ENCODE measurements at regions of chr15 and their contacts with region 1.

Region 1: DNA sequence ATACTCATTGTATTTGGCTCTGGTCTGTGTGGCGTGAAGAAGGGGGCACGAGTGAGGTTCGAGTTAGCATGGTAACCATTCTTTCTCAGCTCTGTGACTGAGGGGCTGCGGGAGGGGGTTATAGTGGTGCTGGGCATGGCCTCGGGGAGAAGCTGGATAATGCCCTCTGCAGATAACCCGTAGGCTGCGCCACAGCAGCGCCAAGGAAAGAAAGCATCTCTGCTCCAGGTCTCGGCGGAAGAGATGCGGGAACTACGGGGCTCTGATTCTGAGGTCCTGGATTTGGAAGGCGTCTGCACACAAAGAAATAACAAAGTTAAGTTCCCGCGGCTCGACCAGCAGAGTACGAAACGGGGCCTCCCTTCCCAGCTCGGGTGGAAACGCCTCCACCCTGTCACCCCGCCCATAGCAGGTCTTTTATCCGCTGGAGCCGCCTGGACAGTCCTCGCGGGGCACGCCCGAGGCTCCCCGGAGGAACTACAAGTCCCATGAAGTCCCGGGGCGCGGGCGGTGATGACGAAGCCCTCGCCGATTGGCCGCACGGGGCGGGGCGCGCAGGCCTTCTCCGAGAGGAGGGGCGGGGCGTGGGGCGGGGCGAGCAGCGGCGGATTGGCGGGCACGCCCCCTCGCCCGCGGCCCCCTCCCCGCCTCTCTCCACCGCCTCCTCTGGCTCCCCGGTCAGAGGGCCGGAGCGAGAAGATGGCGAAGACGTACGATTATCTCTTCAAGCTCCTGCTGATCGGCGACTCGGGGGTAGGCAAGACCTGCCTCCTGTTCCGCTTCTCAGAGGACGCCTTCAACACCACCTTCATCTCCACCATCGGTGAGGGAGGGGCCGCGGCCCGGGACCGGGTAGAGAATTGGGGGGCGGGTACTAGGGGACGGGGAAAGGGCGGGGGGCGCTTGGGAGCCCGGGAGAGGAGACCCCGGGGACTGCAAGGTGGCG is at the start of gene RAB8B:
- DNase-seq: peak; percentile 97 to 99 (median 99)

Region 2: GRCh38 chr15:63048115-63048775 is 141.0 kb before region 1 on chr15:
- intact Hi-C with region 1: loop called (anchors 5 kb)
- DNase-seq: peak; percentile 77 to 95 (median 88)

Region 3: DNA sequence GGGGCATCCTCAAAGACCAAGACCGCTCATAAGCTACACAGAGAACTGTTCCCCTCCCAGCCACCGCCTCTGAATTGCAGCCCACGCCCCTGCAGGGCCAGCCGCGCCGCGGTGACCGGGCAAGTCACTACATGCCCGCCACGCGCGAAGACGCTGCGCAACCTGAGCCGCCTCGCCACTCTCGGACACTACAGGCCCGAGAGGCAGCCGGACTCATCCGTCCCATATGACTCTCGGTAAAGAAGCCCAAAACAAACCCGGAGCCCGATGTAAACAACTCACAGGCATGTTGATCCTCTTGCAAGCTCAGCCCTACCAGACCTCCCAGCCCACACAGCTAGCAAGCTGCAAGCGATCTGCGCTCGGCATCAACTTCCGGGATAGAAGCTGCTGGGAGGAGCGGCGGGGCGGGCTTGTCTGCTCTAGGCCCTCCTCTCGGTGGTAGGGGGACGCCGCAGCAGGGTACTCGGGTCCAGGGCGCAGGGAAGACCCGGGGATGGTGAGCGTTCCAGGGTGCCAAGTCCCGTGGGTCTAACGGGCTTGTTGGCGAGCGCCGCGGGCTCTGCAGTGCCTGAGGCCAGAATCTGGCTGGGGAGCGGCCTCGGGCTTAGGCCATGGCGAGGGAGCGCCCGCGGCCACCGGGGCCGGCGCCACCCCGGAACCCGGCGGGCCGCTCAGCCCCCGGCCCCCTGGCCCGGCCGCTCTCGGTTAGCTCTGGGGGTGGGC is 31.9 kb before region 1 on chr15 and contains the start of gene RPS27L:
- intact Hi-C with region 1: loop called (anchors 2 kb)
- DNase-seq: peak; percentile 81 to 97 (median 94)

Region 4: DNA sequence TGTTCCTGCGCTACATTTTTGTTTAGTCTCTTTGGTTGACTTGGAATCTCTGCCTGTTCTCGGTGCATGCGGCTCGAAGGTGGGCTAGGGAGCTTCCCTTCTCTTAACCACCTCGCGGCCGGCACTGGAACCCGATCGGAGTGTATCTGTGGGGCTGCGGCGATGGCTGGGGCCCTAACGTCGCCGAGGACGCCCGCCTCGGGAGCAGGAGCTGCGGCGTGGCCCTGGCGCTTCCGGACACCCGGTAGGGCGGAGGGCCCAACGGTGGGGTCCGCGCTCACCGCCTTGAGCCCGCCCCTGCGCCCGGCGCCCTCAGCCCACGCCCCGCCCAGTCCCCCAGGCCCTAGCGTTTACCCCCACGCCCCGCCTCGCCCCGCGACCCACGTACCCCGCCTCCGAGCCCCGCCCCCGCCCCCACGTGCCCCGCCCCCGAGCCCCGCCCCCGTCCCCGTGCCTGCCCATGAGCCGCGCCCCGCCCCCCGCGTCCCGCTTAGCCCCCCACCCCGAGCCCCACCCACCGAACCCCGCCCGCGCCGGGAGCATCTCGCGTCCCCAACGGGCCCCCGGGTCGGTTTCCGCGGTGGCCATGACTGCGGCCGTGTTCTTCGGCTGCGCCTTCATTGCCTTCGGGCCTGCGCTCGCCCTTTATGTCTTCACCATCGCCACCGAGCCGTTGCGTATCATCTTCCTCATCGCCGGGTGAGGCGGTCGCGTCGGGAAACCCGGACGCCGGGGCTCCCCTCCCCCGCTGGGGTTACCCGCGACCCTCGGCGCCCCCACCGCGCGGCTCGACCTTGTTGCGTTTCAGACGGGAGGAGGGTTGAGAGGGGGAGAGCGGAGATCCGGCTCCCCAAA is 88.1 kb after region 1 on chr15 and contains the start of gene APH1B:
- intact Hi-C with region 1: loop called (anchors 5 kb)
- DNase-seq: peak; percentile 37 to 91 (median 82)